Gastrocnemius medialis (tissue), 4 donors: ENCODE measurements at regions of chr3 and their contacts with region 1.

Region 1: DNA sequence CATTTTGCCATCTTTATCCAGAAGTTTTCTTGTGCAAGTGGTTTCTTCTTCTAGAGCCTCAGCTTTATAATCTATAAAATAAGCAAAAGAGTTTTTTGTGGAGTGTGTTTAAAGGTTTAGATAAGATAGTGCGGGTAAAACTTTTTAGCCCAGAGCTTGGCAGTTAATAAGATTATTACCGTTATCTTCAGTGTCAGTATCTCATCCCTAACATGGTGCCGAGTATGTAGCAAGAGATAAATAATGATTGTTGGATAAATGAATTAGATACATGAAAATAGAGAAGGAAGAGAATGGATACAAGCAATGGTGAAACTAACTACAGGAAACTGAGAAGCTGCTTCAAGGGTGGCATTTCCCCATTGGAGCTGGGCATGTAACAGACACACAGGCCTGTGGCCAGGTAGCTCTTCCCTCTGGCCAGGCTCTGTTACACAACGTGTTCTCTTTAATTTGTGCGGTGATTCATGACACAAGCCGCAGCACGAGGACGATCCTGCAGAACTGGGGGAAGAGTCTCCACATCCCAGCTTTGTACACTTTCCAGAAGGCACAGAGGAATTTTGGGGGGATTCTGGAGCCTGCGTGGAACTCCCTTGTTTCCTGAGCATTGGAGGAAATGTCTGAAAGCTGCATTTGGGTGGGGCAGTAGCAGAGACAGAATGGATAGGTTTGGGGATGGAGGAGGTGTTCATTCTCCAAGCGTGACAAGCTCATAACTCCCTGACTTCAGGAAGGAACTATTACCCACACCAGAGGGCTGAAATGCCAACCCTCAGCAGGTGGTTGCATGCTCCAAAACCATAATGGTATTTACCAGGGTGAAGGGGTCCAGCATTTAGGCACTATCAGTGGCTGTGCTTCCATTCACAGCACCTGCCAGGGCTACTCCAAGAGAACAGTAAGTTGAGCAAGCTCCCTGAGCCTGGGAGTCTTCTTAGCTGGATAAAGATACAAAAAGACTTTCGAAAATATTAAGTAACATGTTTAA is 14.2 kb upstream of the ST6GAL1 start:
- DNase-seq: peak; percentile 84 to 92
- ATAC-seq: peak; percentile 99
- H3K4me3 ChIP-seq: no peak overlapping the region
- H3K27ac ChIP-seq: peak overlapping the region; percentile 79 to 88 (median 84)
- H3K4me1 ChIP-seq: peaks cover 35 to 39% of the 10 kb centered on the region in 2 donors
- H3K27me3 ChIP-seq: no peaks in the 10 kb centered on the region
- CTCF ChIP-seq: no peak
- POLR2A ChIP-seq: peak in 1 of 2 donors; percentile 12

Region 2: GRCh38 chr3:186705882-186706780 is 210.0 kb before region 1 on chr3:
- in situ Hi-C with region 1: no loop called
- intact Hi-C with region 1: no loop called
- DNase-seq: no peak
- ATAC-seq: no peak
- H3K4me3 ChIP-seq: no peak overlapping the region
- H3K27ac ChIP-seq: no peak overlapping the region
- H3K4me1 ChIP-seq: no peaks in the 10 kb centered on the region
- H3K27me3 ChIP-seq: no peaks in the 10 kb centered on the region
- CTCF ChIP-seq: no peak
- POLR2A ChIP-seq: no peak

Region 3: DNA sequence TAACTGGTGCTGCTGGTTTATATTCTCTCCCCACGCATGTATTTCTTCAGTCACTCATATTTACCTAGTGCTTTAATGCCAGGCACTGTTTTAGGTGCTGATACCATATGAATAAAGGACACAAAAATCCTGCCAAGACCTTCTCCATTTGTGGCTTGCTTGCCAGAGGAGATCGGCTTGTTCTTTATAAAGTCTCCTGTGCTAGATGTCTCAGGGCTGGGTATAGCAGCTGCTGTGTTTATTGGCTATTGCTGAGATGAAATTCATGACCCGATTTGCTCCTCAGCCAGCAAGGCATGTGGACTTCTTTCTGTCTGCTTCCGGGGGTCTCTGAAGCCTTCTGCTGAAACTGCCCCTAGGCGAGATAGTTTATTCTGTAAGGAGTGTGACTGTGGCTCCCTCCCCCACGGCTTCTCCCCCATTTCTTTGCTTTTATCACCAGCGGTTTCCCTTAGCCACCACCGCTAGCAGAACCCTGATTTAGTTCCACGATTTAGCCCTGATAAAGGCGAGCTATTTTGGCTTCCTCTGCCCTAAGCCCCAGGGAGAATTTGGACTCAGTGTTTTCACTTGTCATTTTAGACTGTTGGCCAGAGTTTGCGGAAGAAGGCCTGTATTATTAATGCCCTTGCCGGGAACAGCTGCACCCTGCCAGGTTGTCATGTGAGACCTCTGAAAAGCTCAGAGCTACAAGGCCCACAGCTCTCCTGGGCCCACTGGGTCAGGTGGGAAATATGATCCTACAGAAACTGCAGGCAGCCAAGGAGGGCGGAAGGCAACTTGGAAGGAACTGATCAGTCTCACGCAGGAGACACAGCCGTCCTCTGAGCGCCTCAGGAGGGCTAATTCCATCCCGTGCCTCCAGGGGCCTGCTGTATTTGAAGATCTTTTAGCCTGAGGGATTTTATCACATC is 61.0 kb after region 1 on chr3:
- in situ Hi-C with region 1: loop called in 1 of 4 experiments (anchors 10 kb)
- intact Hi-C with region 1: loop called (anchors 1 kb)
- DNase-seq: peak; percentile 95 to 98
- ATAC-seq: peak; percentile 90 to 92
- H3K4me3 ChIP-seq: peak overlapping the region; percentile 28 to 41 (median 37)
- H3K27ac ChIP-seq: peak overlapping the region; percentile 91 to 97 (median 93)
- H3K4me1 ChIP-seq: peaks cover 53 to 57% of the 10 kb centered on the region in 2 donors
- H3K27me3 ChIP-seq: no peaks in the 10 kb centered on the region
- CTCF ChIP-seq: peak in 3 of 5 experiments; percentile 25 to 52 (median 45)
- POLR2A ChIP-seq: peak in 1 of 2 donors; percentile 14

Region 4: GRCh38 chr3:187445356-187445755 is 529.3 kb after region 1 on chr3:
- in situ Hi-C with region 1: no loop called
- intact Hi-C with region 1: no loop called
- DNase-seq: no peak
- ATAC-seq: no peak
- H3K4me3 ChIP-seq: no peak overlapping the region
- H3K27ac ChIP-seq: no peak overlapping the region
- H3K4me1 ChIP-seq: no peaks in the 10 kb centered on the region
- H3K27me3 ChIP-seq: no peaks in the 10 kb centered on the region
- CTCF ChIP-seq: no peak
- POLR2A ChIP-seq: no peak

Region 5: DNA sequence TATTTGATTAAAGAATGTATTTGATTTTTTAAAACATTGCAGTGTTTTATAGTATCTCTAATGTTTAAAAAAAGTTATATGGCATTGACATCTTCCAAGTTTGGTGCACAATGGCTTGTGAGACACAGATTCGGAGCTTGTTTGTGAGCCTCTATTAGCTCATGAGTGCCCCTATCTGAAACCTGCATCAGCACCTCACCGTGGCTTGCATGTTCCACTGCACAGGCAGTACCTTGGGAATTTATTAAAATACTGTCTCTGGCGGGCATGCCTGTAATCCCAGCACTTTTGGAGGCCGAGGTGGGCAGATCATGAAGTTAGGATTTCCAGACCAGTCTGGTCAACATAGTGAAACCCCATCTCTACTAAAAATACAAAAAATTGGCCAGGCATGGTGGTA is 793.1 kb after region 1 on chr3:
- in situ Hi-C with region 1: no loop called
- intact Hi-C with region 1: loop called (anchors 10 kb)
- DNase-seq: no peak
- ATAC-seq: no peak
- H3K4me3 ChIP-seq: no peak overlapping the region
- H3K27ac ChIP-seq: no peak overlapping the region
- H3K4me1 ChIP-seq: peaks cover 22% of the 10 kb centered on the region in 2 donors
- H3K27me3 ChIP-seq: no peaks in the 10 kb centered on the region
- CTCF ChIP-seq: no peak
- POLR2A ChIP-seq: no peak